ENCODE measurements at regions of chr3 and their contacts with region 1.

Region 1: DNA sequence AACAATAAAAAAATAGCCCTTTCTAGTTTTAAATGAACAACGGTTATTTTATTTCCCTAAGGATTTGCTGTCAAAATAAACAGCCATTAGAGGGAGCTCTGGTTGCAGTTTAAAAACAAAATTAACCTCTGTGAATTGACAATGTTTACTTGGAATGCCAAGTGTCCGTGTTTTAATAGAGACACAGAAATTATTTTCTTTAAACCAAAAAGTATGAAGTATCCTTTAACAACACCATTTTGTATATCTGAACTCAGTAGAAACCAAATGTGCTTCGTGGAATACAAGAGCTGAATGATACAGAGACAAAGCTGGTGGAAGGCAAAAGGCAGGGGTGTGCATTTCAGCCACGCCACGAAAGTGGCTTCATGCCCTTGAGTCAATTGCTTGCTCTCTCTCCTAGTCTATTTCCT is 74.4 kb downstream of the MOBP start:
- DNase-seq: peak; percentile 56
- H3K4me3 ChIP-seq: peak overlapping the region; percentile 55
- H3K27ac ChIP-seq: no peak overlapping the region
- H3K4me1 ChIP-seq: no peaks in the 10 kb centered on the region
- H3K27me3 ChIP-seq: no peaks in the 10 kb centered on the region

Region 2: DNA sequence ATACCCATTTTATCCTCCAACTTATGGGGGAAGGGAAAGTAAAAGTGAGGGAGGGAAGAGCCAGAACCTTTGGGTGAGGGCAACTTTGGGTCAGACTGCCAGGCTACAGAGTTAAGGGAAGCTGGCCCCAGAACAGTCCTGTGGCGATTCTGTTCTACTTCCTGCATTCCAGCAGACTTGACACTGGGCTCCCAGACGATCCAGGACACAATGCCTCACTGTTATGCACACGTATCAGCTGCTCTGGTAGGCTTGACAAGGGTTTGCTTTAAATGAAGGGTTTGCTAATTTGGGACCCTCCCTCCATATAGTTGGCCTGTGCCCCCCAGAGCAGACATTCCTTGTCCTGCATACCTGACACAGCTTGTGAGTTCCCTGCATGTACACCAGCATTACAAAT is 445.1 kb before region 1 on chr3:
- in situ Hi-C with region 1: no loop called
- DNase-seq: peak; percentile 58
- H3K4me3 ChIP-seq: no peak overlapping the region
- H3K27ac ChIP-seq: no peak overlapping the region; the same call in 1 of the 2 replicates
- H3K4me1 ChIP-seq: peaks cover 10% of the 10 kb centered on the region; the same call in 1 of the 2 replicates
- H3K27me3 ChIP-seq: no peaks in the 10 kb centered on the region

Region 3: GRCh38 chr3:39990532-39990931 is 448.6 kb after region 1 on chr3:
- in situ Hi-C with region 1: loop called (anchors 25 kb)
- DNase-seq: peak; percentile 70
- H3K4me3 ChIP-seq: no peak overlapping the region
- H3K27ac ChIP-seq: no peak overlapping the region
- H3K4me1 ChIP-seq: no peaks in the 10 kb centered on the region
- H3K27me3 ChIP-seq: no peaks in the 10 kb centered on the region